IMR-90 (cell line): ENCODE measurements at regions of chr10 and their contacts with region 1.

Region 1: DNA sequence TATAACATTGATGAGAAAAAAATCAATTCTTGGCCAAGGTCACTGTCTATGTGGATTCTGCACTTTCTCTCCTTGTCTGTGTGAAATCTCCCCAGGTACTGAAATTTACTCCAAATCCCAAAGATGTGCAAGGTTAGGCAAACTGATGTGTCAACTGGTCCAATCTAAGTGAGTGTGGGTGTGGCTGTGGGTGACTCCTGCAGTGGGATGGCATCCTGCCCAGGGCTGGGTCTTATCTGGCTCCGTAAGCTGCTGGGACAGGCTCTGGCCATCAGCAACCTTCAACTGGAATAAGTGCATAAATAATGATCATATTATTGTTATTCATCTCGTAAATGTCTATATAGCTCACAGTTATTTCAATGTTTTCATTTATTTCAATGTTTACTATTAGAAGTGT is 79.3 kb downstream of the JCAD start:
- DNase-seq: no peak
- ATAC-seq: no peak
- H3K4me3 ChIP-seq: no peak overlapping the region
- H3K27ac ChIP-seq: no peak overlapping the region
- H3K4me1 ChIP-seq: peaks cover 2% of the 10 kb centered on the region; the same call in 1 of the 2 replicates
- H3K27me3 ChIP-seq: peaks cover 5% of the 10 kb centered on the region
- CTCF ChIP-seq: no peak
- POLR2A ChIP-seq: no peak
- RAD21 ChIP-seq: no peak

Region 2: GRCh38 chr10:29795850-29796249 is 184.2 kb before region 1 on chr10:
- CTCF ChIA-PET with region 1: no interaction called
- POLR2A ChIA-PET with region 1: no interaction called
- dilution Hi-C with region 1: no loop called
- in situ Hi-C with region 1: no loop called
- intact Hi-C with region 1: no loop called
- DNase-seq: peak; percentile 34
- ATAC-seq: no peak
- H3K4me3 ChIP-seq: no peak overlapping the region
- H3K27ac ChIP-seq: no peak overlapping the region
- H3K4me1 ChIP-seq: peaks cover 11% of the 10 kb centered on the region
- H3K27me3 ChIP-seq: no peaks in the 10 kb centered on the region
- CTCF ChIP-seq: no peak
- POLR2A ChIP-seq: no peak
- RAD21 ChIP-seq: no peak

Region 3: GRCh38 chr10:30013757-30014156 is 33.7 kb after region 1 on chr10:
- CTCF ChIA-PET with region 1: no interaction called
- POLR2A ChIA-PET with region 1: no interaction called
- dilution Hi-C with region 1: no loop called
- in situ Hi-C with region 1: no loop called
- intact Hi-C with region 1: loop called (anchors 1 kb)
- DNase-seq: peak; percentile 34
- ATAC-seq: no peak
- H3K4me3 ChIP-seq: no peak overlapping the region
- H3K27ac ChIP-seq: no peak overlapping the region
- H3K4me1 ChIP-seq: peaks cover 20% of the 10 kb centered on the region
- H3K27me3 ChIP-seq: no peaks in the 10 kb centered on the region
- CTCF ChIP-seq: no peak
- POLR2A ChIP-seq: no peak
- RAD21 ChIP-seq: no peak